ENCODE measurements at regions of chr4 and their contacts with region 1.

Region 1: GRCh38 chr4:44629280-44629866 is 22.1 kb downstream of the YIPF7 start:
- DNase-seq: peak; percentile 73
- H3K4me3 ChIP-seq: no peak overlapping the region
- H3K27ac ChIP-seq: no peak overlapping the region
- H3K4me1 ChIP-seq: no peaks in the 10 kb centered on the region
- H3K27me3 ChIP-seq: no peaks in the 10 kb centered on the region
- CTCF ChIP-seq: peak; percentile 73

Region 2: GRCh38 chr4:43132010-43132582 is 1497.3 kb before region 1 on chr4:
- CTCF ChIA-PET with region 1: interaction called, 3 read pairs
- POLR2A ChIA-PET with region 1: no interaction called
- intact Hi-C with region 1: loop called (anchors 2 kb)
- DNase-seq: peak; percentile 59
- H3K4me3 ChIP-seq: no peak overlapping the region
- H3K27ac ChIP-seq: no peak overlapping the region
- H3K4me1 ChIP-seq: no peaks in the 10 kb centered on the region
- H3K27me3 ChIP-seq: no peaks in the 10 kb centered on the region
- CTCF ChIP-seq: peak; percentile 85

Region 3: DNA sequence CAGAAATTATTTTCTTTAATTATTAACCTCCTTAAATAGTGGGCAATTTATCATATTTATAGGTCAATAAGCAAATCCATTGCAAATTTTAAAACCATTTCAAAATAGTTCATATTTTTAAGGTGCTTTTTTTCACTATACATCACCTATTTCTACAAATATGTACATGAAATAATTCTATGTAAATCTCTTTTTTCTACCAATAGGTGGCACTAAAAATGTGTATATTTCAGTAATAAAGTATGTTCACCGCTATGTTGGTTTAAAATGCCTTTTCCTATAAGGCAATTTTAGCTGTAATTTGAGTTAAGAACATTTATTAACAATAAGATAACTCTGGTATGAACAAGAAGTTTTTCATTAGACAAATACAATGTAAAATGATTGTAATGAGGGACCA is 853.0 kb before region 1 on chr4:
- CTCF ChIA-PET with region 1: no interaction called
- POLR2A ChIA-PET with region 1: no interaction called
- intact Hi-C with region 1: loop called (anchors 5 kb)
- DNase-seq: peak; percentile 6
- H3K4me3 ChIP-seq: no peak overlapping the region
- H3K27ac ChIP-seq: no peak overlapping the region
- H3K4me1 ChIP-seq: no peaks in the 10 kb centered on the region
- H3K27me3 ChIP-seq: no peaks in the 10 kb centered on the region
- CTCF ChIP-seq: peak; percentile 46; the same call in 1 of the 2 replicates

Region 4: GRCh38 chr4:44132526-44132925 is 496.8 kb before region 1 on chr4:
- CTCF ChIA-PET with region 1: no interaction called
- POLR2A ChIA-PET with region 1: no interaction called
- intact Hi-C with region 1: no loop called
- DNase-seq: no peak
- H3K4me3 ChIP-seq: no peak overlapping the region
- H3K27ac ChIP-seq: no peak overlapping the region
- H3K4me1 ChIP-seq: no peaks in the 10 kb centered on the region
- H3K27me3 ChIP-seq: no peaks in the 10 kb centered on the region
- CTCF ChIP-seq: no peak

Measured in A673 (cell line).